Heart left ventricle (tissue), 16 donors: ENCODE measurements at regions of chr3 and their contacts with region 1.

Region 1: DNA sequence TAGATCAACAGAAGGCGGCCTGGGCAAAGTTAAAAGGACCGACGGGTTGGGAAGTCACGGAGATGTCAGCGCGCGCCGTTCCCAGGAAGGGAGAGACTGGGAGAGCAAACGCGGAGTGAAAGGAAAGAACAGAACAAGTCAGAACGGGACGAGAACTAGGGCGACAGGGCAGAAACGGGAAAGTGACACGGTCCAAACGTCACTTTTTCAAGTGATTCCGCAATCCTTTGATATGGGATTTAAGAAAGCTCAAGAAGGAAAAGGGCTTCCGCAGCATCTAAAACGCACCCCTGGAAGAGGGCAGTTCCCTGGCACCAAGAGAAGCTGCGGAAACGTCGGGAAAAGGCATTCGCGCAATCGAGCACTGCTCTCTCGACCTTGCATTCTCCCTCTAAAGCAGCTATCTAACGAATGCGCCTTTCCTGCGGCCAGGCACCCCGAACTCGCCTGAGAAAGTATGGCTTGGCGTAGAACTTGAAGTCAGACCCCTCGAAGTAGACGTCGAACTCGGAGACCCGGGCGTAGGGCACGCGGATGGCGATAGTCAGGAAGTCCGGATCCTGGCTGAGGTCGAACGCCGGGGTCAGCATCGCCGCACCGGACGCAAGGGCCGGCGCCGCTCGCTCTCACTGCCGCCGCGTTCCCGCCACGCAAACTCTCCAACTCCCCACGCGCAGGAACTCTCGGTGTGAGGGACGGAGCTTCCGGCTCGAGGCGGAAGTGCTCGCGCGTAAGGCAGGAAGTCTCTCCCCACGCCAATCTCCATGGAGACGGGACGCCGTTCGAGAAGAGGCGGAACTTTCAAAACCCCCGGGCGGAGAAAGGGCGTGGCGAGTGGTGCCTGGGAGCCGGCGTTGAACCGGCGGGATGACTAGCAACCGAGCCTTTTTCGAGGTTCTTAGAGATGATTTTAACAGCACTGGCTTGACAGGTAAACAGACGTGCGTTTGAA is at the start of gene SHQ1:
- DNase-seq: peak; percentile 96 to 98 (median 97)
- ATAC-seq: peak; percentile 98 to 99 (median 98)
- H3K4me3 ChIP-seq: peak within 1 kb of the TSS; percentile 30 to 95 (median 76)
- H3K27ac ChIP-seq: peak within 1 kb of the TSS; percentile 29 to 84 (median 74)
- H3K4me1 ChIP-seq: peaks cover 7 to 47% (median 20%) of the 10 kb centered on the region in 12 donors
- H3K27me3 ChIP-seq: no peaks in the 10 kb centered on the region
- CTCF ChIP-seq: no peak
- POLR2A ChIP-seq: peak in 1 of 2 donors; percentile 71
- total RNA-seq, gene SHQ1: 13.6 to 26.0 (median 19.9) TPM

Region 2: GRCh38 chr3:72810659-72811434 is 37.2 kb before region 1 on chr3:
- intact Hi-C with region 1: no loop called
- DNase-seq: no peak
- ATAC-seq: peak in 1 of 4 donors; percentile 45
- H3K4me3 ChIP-seq: no peak overlapping the region
- H3K27ac ChIP-seq: no peak overlapping the region
- H3K4me1 ChIP-seq: peaks cover 0 to 19% (median 1%) of the 10 kb centered on the region in 12 donors
- H3K27me3 ChIP-seq: no peaks in the 10 kb centered on the region
- CTCF ChIP-seq: no peak
- POLR2A ChIP-seq: no peak

Region 3: DNA sequence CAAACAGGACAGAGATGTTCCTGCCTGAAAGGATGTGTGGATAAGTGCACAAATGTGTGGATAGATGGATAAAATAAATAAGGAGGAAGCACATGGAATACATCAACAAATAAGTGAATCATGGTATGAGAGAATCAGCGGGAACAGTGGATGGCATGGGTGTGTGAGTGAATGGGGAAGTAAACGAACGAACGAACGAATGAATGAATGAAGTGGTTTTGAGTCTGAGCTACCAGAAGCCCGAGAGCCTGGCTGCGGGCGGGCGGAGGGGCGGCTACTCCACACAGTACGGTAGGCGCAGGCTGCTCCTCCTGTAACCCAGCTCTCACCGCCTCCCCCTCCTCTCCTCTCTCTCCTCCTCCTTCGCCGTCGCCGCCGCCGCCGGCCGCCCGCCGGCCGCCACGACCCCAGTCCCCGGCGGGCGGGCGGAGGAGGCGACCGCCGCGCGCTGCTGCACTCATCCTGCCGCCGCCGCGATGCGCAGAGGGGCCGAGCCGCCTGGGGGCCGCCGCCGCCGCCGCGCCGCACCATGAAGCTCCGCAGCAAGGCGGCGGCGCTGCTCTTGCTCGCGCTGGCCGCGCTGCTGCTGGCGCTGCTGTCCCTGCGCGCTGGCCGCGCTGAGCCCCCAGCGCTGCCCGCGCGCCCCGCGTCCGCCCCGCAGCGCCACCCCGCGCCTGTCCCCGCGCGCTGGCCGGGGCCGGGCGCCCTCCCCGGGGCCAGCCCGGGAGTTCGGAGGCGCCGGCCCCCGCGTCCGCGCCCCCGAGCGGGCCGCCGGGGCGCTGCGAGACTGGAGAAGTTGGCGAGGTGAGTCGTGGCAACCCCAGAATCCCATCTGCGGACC is 39.9 kb after region 1 on chr3 and contains the start of gene GXYLT2:
- intact Hi-C with region 1: loop called in 1 of 10 experiments (anchors 5 kb)
- DNase-seq: peak; percentile 70 to 84 (median 80)
- ATAC-seq: peak; percentile 81 to 89 (median 84)
- H3K4me3 ChIP-seq: peak within 1 kb of the TSS; percentile 26 to 78 (median 56)
- H3K27ac ChIP-seq: peak within 1 kb of the TSS in 11 of 12 donors; percentile 46 to 77 (median 69)
- H3K4me1 ChIP-seq: peaks cover 0 to 45% (median 21%) of the 10 kb centered on the region in 12 donors
- H3K27me3 ChIP-seq: peaks cover 0 to 16% (median 0%) of the 10 kb centered on the region in 9 donors
- CTCF ChIP-seq: peak in 2 of 12 donors; percentile 7 to 11
- POLR2A ChIP-seq: no peak
- total RNA-seq, gene GXYLT2: 12.7 to 35.2 (median 17.7) TPM

Region 4: DNA sequence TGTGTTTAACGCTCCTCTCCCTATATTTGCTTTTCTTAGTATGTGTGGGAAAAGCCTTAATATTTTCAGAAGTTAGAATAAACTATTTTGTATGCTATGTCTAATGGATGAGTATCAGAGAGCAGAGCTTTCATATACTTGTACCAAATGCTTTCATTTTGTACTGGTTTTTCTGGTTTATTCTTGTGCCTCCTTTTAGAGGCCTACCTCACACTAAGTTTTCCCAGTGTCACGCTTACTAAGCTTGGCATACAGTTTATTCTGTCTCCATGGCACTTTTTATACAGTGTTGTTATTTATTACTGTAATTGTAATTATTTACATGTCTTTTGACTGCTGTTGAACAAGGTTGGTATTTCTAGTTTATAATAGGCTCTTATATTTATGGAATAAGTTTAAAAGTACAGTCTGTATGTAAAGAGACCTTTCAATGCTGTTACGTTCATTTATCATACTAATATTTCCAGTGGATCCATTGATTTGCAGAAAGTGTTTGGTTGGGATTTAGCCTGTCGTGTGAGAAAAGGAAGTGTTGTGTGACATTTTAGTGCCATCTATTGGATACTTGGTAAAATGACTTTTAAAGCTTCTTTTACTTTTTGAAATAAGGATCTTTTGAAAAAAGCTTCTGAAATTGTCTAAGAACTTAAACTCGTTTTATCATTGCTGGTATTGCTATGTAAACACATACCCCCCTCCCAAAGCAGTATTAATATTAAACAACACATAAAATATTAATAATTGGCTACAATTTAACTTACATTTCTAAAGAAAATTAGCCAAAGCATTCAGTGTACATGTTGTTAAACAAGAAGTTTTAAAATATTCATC is 208.2 kb after region 1 on chr3:
- intact Hi-C with region 1: loop called in 3 of 10 experiments (anchors 5 to 10 kb)
- DNase-seq: no peak
- ATAC-seq: peak in 2 of 4 donors; percentile 51 to 58
- H3K4me3 ChIP-seq: no peak overlapping the region
- H3K27ac ChIP-seq: peak overlapping the region in 4 of 12 donors; percentile 21 to 61 (median 30)
- H3K4me1 ChIP-seq: peaks cover 0 to 41% (median 11%) of the 10 kb centered on the region in 12 donors
- H3K27me3 ChIP-seq: no peaks in the 10 kb centered on the region
- CTCF ChIP-seq: peak; percentile 30 to 69 (median 58)
- POLR2A ChIP-seq: no peak

Region 5: GRCh38 chr3:73070675-73071575 is 222.9 kb after region 1 on chr3:
- intact Hi-C with region 1: loop called in 2 of 10 experiments (anchors 5 to 10 kb)
- DNase-seq: no peak
- ATAC-seq: peak in 1 of 4 donors; percentile 5
- H3K4me3 ChIP-seq: no peak overlapping the region
- H3K27ac ChIP-seq: no peak overlapping the region
- H3K4me1 ChIP-seq: peaks cover 0 to 16% (median 9%) of the 10 kb centered on the region in 12 donors
- H3K27me3 ChIP-seq: no peaks in the 10 kb centered on the region
- CTCF ChIP-seq: no peak
- POLR2A ChIP-seq: no peak

Region 6: GRCh38 chr3:73080216-73080966 is 232.4 kb after region 1 on chr3:
- intact Hi-C with region 1: loop called in 8 of 10 experiments (anchors 5 to 10 kb)
- DNase-seq: no peak
- ATAC-seq: no peak
- H3K4me3 ChIP-seq: no peak overlapping the region
- H3K27ac ChIP-seq: no peak overlapping the region
- H3K4me1 ChIP-seq: no peaks in the 10 kb centered on the region
- H3K27me3 ChIP-seq: no peaks in the 10 kb centered on the region
- CTCF ChIP-seq: no peak
- POLR2A ChIP-seq: no peak